HepG2 (cell line): ENCODE measurements at regions of chrX and their contacts with region 1.

Region 1: DNA sequence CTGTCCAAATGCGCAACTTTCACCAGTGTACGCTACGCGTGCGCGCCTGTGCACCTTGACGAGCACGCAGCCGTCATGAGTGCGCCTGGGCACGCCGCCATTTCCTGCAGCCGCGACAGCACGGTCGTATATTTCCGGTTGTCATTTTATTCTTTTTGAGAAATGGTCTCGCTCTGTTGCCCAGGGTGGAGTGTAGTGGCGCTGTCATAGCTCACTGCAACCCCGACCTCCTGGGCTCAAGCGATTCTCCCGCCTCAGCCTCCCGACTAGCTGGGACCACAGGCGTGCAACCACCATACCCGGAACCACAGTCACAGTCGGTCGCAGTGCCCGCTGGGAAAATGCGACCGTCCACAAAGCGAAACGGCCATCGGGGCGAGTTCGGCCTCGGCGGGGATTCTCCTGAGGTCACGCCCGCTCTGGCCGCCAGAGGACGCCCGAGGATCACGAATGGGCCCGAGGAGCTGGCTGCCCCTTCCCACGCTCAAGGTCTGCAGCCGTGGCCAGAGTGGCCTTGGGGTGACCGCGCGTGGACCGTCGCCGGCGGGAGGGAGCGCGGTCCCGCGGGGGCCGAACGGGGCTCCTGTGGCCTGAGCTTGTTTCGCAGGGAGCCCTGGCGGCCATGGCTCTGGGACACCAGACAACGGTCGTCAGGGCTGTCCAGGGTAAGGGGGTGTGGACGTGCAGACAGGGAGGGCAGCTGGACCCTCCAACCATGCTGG is 23.7 kb upstream of the PNMA3 start:
- DNase-seq: peak; percentile 21
- ATAC-seq: peak; percentile 83
- H3K4me3 ChIP-seq: peak overlapping the region in 2 of 3 experiments; percentile 17 to 60; a peak in 3 of 6 replicates
- H3K27ac ChIP-seq: no peak overlapping the region
- H3K4me1 ChIP-seq: 0 out of 2 replicates have a peak, but pooled peaks cover 9% of the 10 kb centered on the region
- H3K27me3 ChIP-seq: no peaks in the 10 kb centered on the region
- CTCF ChIP-seq: peak; percentile 97
- EP300 ChIP-seq: no peak
- POLR2A ChIP-seq: no peak
- RAD21 ChIP-seq: peak; percentile 97

Region 2: DNA sequence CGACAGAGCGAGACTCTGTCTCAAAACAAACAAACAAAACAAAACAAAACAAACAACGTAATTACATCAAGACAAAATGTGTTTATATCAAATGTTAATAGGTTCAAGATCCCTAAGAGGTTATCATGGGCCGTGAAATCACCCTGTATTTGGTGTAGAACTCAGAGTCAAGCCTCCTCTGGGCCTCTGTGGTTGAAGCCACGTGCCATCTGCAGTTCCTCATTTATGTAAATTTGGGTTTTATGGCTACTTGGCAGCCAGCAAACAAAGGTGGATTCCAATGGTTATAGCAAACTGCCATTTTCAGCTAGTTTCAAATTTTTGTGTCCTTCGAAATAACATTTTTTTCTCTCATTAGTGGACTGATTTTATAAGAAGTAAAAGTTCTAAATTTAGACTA is 185.3 kb before region 1 on chrX:
- CTCF ChIA-PET with region 1: no interaction called
- POLR2A ChIA-PET with region 1: no interaction called
- in situ Hi-C with region 1: no loop called
- intact Hi-C with region 1: no loop called
- DNase-seq: no peak
- ATAC-seq: no peak
- H3K4me3 ChIP-seq: no peak overlapping the region
- H3K27ac ChIP-seq: no peak overlapping the region
- H3K4me1 ChIP-seq: no peaks in the 10 kb centered on the region
- H3K27me3 ChIP-seq: no peaks in the 10 kb centered on the region
- CTCF ChIP-seq: no peak
- EP300 ChIP-seq: no peak
- POLR2A ChIP-seq: no peak
- RAD21 ChIP-seq: no peak

Region 3: GRCh38 chrX:152941328-152942106 is 91.0 kb before region 1 on chrX:
- CTCF ChIA-PET with region 1: no interaction called
- POLR2A ChIA-PET with region 1: no interaction called
- in situ Hi-C with region 1: loop called (anchors 5 kb)
- intact Hi-C with region 1: no loop called
- DNase-seq: peak; percentile 63
- ATAC-seq: peak; percentile 93
- H3K4me3 ChIP-seq: peak overlapping the region in 2 of 3 experiments; percentile 51 to 66; a peak in 4 of 6 replicates
- H3K27ac ChIP-seq: no peak overlapping the region
- H3K4me1 ChIP-seq: peaks cover 5% of the 10 kb centered on the region; the same call in 1 of the 2 replicates
- H3K27me3 ChIP-seq: no peaks in the 10 kb centered on the region
- CTCF ChIP-seq: peak; percentile 92
- EP300 ChIP-seq: no peak
- POLR2A ChIP-seq: no peak
- RAD21 ChIP-seq: peak; percentile 92

Region 4: GRCh38 chrX:153411255-153411987 is 378.9 kb after region 1 on chrX and contains the start of gene ZFP92:
- CTCF ChIA-PET with region 1: no interaction called
- POLR2A ChIA-PET with region 1: no interaction called
- in situ Hi-C with region 1: loop called (anchors 10 kb)
- intact Hi-C with region 1: no loop called
- DNase-seq: no peak
- ATAC-seq: no peak
- H3K4me3 ChIP-seq: no peak within 1 kb of the TSS
- H3K27ac ChIP-seq: peak within 1 kb of the TSS; percentile 67
- H3K4me1 ChIP-seq: peaks cover 48% of the 10 kb centered on the region
- H3K27me3 ChIP-seq: peaks cover 0 to 2% of the 10 kb centered on the region in 2 experiments; a peak in 1 of 5 replicates
- CTCF ChIP-seq: no peak
- EP300 ChIP-seq: no peak
- POLR2A ChIP-seq: no peak
- RAD21 ChIP-seq: no peak
- total RNA-seq, gene ZFP92: 0.02 and 0.03 TPM in 2 replicates